Aorta (tissue), 5 donors: ENCODE measurements at regions of chr4 and their contacts with region 1.

Region 1: GRCh38 chr4:41143311-41144039 is 70.9 kb downstream of the APBB2 start:
- DNase-seq: peak in 1 of 2 donors; percentile 63
- ATAC-seq: peak; percentile 82
- H3K4me3 ChIP-seq: peak overlapping the region in 1 of 2 donors; percentile 33
- H3K27ac ChIP-seq: peak overlapping the region; percentile 89 to 99
- H3K4me1 ChIP-seq: peaks cover 17 to 27% of the 10 kb centered on the region in 2 donors
- H3K27me3 ChIP-seq: no peaks in the 10 kb centered on the region

Region 2: GRCh38 chr4:40976343-40976742 is 167.1 kb before region 1 on chr4:
- intact Hi-C with region 1: no loop called
- DNase-seq: no peak
- ATAC-seq: no peak
- H3K4me3 ChIP-seq: no peak overlapping the region
- H3K27ac ChIP-seq: no peak overlapping the region
- H3K4me1 ChIP-seq: no peaks in the 10 kb centered on the region
- H3K27me3 ChIP-seq: no peaks in the 10 kb centered on the region

Region 3: GRCh38 chr4:41080976-41081375 is 62.5 kb before region 1 on chr4:
- intact Hi-C with region 1: no loop called
- DNase-seq: no peak
- ATAC-seq: no peak
- H3K4me3 ChIP-seq: no peak overlapping the region
- H3K27ac ChIP-seq: no peak overlapping the region
- H3K4me1 ChIP-seq: peaks cover 2% of the 10 kb centered on the region in 2 donors
- H3K27me3 ChIP-seq: no peaks in the 10 kb centered on the region

Region 4: DNA sequence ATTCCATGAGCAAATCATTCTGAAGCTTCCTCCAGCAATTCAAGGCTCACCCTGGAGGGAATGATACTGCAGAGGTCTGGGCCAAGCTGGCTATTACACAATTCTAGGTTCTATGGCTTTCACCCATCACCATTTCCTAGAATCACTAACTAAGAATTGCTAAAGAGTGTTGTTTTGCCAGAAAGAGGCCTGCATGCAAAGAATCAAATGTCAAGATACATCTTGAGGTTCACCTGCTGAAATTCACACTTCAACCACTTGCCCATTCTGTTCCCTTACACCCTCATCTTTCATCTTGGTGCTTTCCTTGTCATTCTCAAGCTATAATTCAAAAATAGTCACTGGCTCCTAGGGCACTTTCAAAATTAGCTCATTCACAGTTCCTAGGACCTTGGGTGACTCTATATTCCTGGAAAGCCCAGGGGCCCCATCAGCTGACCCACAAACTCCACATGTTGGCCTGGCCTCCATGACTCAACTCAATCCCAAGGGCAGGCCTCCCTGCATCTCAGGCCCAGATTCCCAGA is 63.9 kb after region 1 on chr4:
- intact Hi-C with region 1: loop called (anchors 5 kb)
- DNase-seq: no peak
- ATAC-seq: peak; percentile 61
- H3K4me3 ChIP-seq: no peak overlapping the region
- H3K27ac ChIP-seq: no peak overlapping the region
- H3K4me1 ChIP-seq: peaks cover 2 to 13% of the 10 kb centered on the region in 2 donors
- H3K27me3 ChIP-seq: no peaks in the 10 kb centered on the region

Region 5: GRCh38 chr4:41236046-41236445 is 92.6 kb after region 1 on chr4:
- intact Hi-C with region 1: no loop called
- DNase-seq: no peak
- ATAC-seq: no peak
- H3K4me3 ChIP-seq: no peak overlapping the region
- H3K27ac ChIP-seq: no peak overlapping the region
- H3K4me1 ChIP-seq: no peaks in the 10 kb centered on the region
- H3K27me3 ChIP-seq: no peaks in the 10 kb centered on the region